OCI-LY7 (cell line): ENCODE measurements at regions of chr9 and their contacts with region 1.

Region 1: DNA sequence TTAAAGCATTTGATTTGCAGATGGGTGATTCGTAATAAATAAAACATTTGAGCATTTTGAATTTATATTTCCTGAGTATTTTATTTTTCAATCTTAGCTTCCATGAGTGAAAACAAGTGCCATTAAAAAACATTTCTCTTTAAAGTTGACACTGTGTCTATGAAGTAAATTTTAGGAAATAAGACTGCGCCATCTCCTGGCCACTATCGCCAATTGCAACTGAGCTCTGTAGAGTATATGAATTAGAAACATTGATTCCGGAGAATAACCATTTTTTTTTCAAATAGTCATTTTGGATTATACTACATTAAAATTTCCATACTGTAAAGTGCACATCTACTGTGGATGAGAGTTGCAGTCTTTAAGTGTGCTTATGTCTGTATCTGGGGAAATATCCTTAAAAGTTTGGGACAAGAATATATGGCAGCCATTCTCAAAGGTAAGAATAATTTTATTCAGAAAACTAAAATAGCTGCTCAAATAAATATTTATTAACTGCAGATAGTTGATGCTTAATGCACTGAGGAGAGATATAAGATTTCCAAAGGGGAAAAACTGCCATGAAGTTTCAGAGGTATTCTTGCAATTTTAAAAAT is 5.9 kb downstream of the DMRTA1 start:
- DNase-seq: peak; percentile 53
- H3K4me3 ChIP-seq: no peak overlapping the region
- H3K27ac ChIP-seq: no peak overlapping the region
- H3K4me1 ChIP-seq: no peaks in the 10 kb centered on the region
- CTCF ChIP-seq: peak; percentile 99

Region 2: DNA sequence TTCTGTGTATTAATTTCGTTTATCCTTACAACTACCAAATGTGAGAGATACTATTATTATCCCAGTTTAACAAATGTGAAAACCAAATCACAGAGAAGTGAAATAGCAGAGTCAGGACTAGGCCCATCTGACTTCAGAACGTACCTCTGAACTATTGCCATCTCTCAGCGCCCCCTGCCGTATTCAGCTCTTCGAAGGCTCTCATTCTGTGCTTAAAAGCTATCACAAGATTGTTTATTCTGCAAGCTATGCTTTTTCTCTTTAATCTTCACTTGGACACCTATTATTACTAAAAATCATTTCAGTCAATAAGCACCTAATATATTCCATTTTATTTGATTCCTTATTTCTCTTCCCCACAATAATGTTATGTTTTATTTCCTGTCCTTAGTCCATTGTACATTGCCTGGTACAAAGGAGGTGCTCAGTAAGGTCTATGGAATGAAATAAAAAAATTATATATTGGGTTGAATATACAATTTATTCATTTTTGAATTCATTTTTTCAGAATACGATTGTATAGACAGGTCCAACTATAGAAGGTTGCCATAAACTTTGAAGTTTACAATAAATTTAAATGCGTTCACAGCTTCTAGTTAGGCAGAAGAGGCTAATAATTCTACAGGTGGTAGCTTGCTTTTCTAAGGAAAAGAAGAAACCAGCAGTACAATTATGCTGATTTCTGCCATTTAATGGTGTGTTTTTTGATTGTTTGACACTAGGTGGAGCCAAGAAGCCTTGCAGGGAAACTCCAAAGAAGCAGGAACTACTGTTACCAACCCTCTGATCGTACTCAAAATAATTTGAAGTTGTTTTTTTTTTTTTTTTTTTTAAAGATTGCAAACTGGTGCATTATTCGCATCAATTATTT is 208.1 kb before region 1 on chr9:
- CTCF ChIA-PET with region 1: interaction called, 4 read pairs
- POLR2A ChIA-PET with region 1: no interaction called
- intact Hi-C with region 1: loop called (anchors 2 kb)
- DNase-seq: peak; percentile 70
- H3K4me3 ChIP-seq: no peak overlapping the region
- H3K27ac ChIP-seq: no peak overlapping the region
- H3K4me1 ChIP-seq: peaks cover 29% of the 10 kb centered on the region
- CTCF ChIP-seq: peak; percentile 77

Region 3: DNA sequence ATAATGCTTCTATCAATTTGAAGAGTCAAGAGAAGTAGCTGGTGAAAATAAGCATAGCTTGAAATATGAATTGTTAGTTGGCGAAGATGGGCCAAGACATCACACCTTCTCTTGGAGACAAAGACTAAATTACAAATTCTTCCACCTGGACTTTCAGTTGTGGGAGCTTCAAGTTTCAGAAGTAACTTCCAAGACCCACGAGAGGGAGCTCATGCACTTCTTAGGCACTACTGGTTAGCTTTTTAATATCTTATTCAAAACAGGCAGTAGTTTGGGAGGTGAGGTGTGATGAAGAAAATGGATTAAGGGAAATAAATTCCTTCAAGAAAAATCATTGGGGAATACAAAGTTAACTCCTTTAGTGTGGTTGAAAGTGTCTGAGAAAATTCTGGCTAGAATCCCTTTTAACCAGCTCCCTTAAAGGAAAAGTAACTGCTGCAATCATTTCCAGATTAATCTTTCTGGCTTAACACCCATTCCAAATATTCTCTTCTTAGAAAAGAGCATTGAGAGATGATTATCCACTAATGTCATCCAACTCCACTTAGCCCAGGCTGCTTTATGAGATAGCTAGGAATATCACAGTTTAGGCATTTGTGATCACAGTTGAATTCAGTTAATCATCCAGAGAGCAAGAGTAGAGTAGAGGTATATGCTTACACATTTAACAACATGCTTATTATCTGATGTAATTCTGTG is 145.4 kb before region 1 on chr9:
- CTCF ChIA-PET with region 1: no interaction called
- POLR2A ChIA-PET with region 1: no interaction called
- intact Hi-C with region 1: loop called (anchors 1 kb)
- DNase-seq: peak; percentile 60
- H3K4me3 ChIP-seq: no peak overlapping the region
- H3K27ac ChIP-seq: no peak overlapping the region
- H3K4me1 ChIP-seq: no peaks in the 10 kb centered on the region
- CTCF ChIP-seq: peak; percentile 85